ENCODE measurements at regions of chr4 and their contacts with region 1.

Region 1: DNA sequence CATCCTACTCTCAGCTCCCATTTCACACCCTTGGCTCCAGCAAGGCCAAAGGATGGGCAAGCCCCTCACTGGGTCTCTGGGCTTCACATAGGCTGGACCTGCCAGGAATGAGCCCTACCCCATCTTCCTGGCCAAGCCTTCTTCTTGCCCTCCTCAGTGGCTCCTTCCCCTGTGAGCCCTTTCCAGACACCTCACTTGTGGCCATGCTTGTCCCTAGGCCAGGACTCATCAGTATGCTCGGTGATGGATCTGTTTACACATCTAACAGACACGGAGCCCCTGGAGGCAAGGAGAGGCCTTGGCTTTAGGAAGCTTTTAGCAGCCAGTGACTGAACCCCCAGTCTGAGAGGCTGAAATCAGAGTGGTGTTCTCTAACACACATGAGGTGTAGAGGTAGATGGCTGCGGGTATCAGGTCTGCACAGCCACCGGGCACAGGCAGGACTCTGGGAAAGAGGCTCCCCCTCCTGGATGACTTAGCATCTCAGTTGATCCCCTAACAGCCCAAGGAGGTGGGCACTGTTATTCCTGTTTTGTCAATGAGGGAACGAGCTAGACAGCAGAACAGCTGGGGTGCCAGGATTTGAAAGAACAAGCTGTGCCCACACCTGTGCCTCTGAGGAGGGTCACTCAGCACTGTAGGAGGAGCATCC is 44.8 kb downstream of the PPP2R2C start:
- DNase-seq: no peak
- H3K4me3 ChIP-seq: no peak overlapping the region
- H3K27ac ChIP-seq: no peak overlapping the region
- H3K4me1 ChIP-seq: no peaks in the 10 kb centered on the region; a peak in 1 of 4 replicates
- H3K27me3 ChIP-seq: no peaks in the 10 kb centered on the region
- CTCF ChIP-seq: no peak
- EP300 ChIP-seq: no peak
- RAD21 ChIP-seq: peak; percentile 45

Region 2: GRCh38 chr4:6437826-6438238 is 10.3 kb after region 1 on chr4:
- CTCF ChIA-PET with region 1: interaction called, 15 read pairs
- POLR2A ChIA-PET with region 1: no interaction called
- DNase-seq: no peak
- H3K4me3 ChIP-seq: no peak overlapping the region
- H3K27ac ChIP-seq: no peak overlapping the region; a peak in 1 of 4 replicates
- H3K4me1 ChIP-seq: peaks cover 0 to 16% of the 10 kb centered on the region in 2 experiments; a peak in 1 of 4 replicates
- H3K27me3 ChIP-seq: no peaks in the 10 kb centered on the region
- CTCF ChIP-seq: no peak
- EP300 ChIP-seq: no peak
- RAD21 ChIP-seq: no peak

Region 3: GRCh38 chr4:6732441-6733357 is 305.1 kb after region 1 on chr4:
- CTCF ChIA-PET with region 1: no interaction called
- POLR2A ChIA-PET with region 1: no interaction called
- DNase-seq: peak; percentile 6
- H3K4me3 ChIP-seq: no peak overlapping the region
- H3K27ac ChIP-seq: no peak overlapping the region
- H3K4me1 ChIP-seq: no peaks in the 10 kb centered on the region
- H3K27me3 ChIP-seq: no peaks in the 10 kb centered on the region
- CTCF ChIP-seq: no peak
- EP300 ChIP-seq: no peak
- RAD21 ChIP-seq: no peak